Activated CD4-positive, alpha-beta memory T cell treated with anti-CD3 and anti-CD28 coated beads for 36 hours (primary cell): ENCODE measurements at regions of chr2 and their contacts with region 1.

Region 1: DNA sequence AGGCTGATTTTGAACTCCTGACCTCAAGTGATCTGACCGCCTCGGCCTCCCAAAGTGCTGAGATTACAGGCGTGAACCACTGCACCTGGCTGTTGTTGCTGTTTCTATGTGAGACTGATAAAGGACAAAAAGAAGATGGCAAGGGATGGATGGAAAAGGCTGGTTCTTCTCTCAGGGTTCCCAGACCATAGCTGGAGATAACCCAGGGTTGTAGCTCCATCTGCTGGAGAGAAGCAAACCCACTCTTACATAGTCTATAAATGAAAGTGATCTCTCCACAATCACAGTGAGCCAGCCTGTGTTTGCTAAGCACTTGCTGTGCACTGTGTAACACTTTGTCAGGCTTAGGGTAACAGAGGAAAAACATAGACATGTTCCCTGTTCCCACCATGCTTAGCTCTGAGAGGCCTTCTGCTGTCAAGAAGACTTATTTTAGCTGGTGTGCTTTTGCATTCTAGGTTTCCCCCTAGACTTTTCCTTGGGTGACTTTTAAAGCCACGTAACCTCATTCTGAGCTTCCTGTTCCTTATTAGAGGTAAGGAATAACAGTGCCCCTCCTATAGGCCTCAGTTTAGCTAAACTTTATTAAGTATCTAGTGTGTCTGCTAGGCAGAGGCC is 49.7 kb downstream of the LIMS1 start:
- DNase-seq: peak; percentile 66
- H3K4me3 Mint-ChIP-seq: no peak overlapping the region
- H3K27ac Mint-ChIP-seq: no peak overlapping the region
- H3K4me1 Mint-ChIP-seq: peaks cover 29% of the 10 kb centered on the region
- H3K27me3 Mint-ChIP-seq: no peaks in the 10 kb centered on the region

Region 2: DNA sequence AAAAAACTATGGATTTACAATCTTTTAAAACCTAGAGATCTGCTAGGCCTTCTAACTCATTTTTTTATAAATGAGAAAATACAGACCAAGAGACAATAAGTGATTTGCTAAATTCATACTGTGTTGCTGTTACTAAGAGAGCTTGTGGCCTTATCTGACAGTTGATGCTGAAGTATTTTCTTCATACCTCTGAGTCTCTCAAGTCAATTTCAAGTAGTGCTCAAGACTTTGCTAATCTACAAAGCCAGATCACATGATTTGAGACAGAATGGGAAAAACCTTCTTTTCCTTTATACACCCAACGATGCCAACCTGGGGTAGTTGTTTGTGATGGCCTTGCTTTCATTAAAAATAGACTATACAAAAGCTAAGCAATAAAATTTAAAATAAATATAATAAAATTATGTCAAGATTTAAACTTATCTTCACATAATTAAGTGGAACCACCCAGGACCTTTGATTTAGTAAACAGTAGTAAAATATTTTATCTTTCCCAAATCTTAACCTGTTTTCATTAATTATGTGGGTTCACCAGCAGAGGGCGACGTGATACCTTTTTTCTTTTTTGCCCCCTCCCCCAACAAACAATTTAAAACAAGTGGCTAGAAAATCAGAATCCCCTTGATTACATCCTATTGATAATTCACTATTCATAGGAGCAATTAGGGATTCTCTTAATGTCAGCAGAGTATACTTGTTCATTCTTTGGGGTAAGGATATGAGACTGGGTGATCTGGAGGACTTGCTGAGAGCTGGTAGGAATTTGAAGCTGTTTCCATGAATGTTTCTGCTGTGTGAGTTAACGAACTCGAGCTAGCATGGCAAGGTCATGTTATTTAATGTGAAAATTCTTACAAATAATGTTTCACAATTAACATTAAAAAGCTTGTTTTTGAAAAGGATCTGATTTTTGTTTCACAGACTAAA is 647.3 kb before region 1 on chr2:
- CTCF ChIA-PET with region 1: no interaction called
- POLR2A ChIA-PET with region 1: no interaction called
- intact Hi-C with region 1: loop called (anchors 5 kb)
- DNase-seq: peak; percentile 9
- H3K4me3 Mint-ChIP-seq: no peak overlapping the region
- H3K27ac Mint-ChIP-seq: no peak overlapping the region
- H3K4me1 Mint-ChIP-seq: no peaks in the 10 kb centered on the region
- H3K27me3 Mint-ChIP-seq: no peaks in the 10 kb centered on the region

Region 3: GRCh38 chr2:108351889-108352288 is 232.1 kb before region 1 on chr2:
- CTCF ChIA-PET with region 1: interaction called, 6 read pairs
- POLR2A ChIA-PET with region 1: no interaction called
- intact Hi-C with region 1: loop called (anchors 1 kb)
- DNase-seq: no peak
- H3K4me3 Mint-ChIP-seq: no peak overlapping the region
- H3K27ac Mint-ChIP-seq: no peak overlapping the region
- H3K4me1 Mint-ChIP-seq: no peaks in the 10 kb centered on the region
- H3K27me3 Mint-ChIP-seq: peaks cover 8% of the 10 kb centered on the region

Region 4: GRCh38 chr2:108448678-108449493 is 135.1 kb before region 1 on chr2 and contains the start of gene GCC2:
- CTCF ChIA-PET with region 1: interaction called, 4 read pairs
- POLR2A ChIA-PET with region 1: no interaction called
- intact Hi-C with region 1: loop called (anchors 1 kb)
- DNase-seq: peak; percentile 97
- H3K4me3 Mint-ChIP-seq: peak within 1 kb of the TSS; percentile 96
- H3K27ac Mint-ChIP-seq: peak within 1 kb of the TSS; percentile 97
- H3K4me1 Mint-ChIP-seq: peaks cover 38% of the 10 kb centered on the region
- H3K27me3 Mint-ChIP-seq: no peaks in the 10 kb centered on the region
- total RNA-seq, gene GCC2: 43.6 to 47.3 TPM

Region 5: GRCh38 chr2:108533832-108534583 is 50.0 kb before region 1 on chr2 and contains the start of gene LIMS1:
- CTCF ChIA-PET with region 1: interaction called, 11 read pairs
- POLR2A ChIA-PET with region 1: no interaction called
- intact Hi-C with region 1: loop called (anchors 1 kb)
- DNase-seq: peak; percentile 92
- H3K4me3 Mint-ChIP-seq: peak within 1 kb of the TSS; percentile 95
- H3K27ac Mint-ChIP-seq: peak within 1 kb of the TSS; percentile 91
- H3K4me1 Mint-ChIP-seq: peaks cover 37% of the 10 kb centered on the region
- H3K27me3 Mint-ChIP-seq: no peaks in the 10 kb centered on the region
- total RNA-seq, gene LIMS1: 102 to 104 TPM

Region 6: GRCh38 chr2:108607706-108608301 is 23.8 kb after region 1 on chr2:
- CTCF ChIA-PET with region 1: interaction called, 4 read pairs
- POLR2A ChIA-PET with region 1: no interaction called
- intact Hi-C with region 1: loop called (anchors 1 kb)
- DNase-seq: peak; percentile 69
- H3K4me3 Mint-ChIP-seq: no peak overlapping the region
- H3K27ac Mint-ChIP-seq: peak overlapping the region; percentile 16
- H3K4me1 Mint-ChIP-seq: peaks cover 54% of the 10 kb centered on the region
- H3K27me3 Mint-ChIP-seq: no peaks in the 10 kb centered on the region